Motor neuron (in vitro differentiated cells): ENCODE measurements at regions of chr22 and their contacts with region 1.

Region 1: DNA sequence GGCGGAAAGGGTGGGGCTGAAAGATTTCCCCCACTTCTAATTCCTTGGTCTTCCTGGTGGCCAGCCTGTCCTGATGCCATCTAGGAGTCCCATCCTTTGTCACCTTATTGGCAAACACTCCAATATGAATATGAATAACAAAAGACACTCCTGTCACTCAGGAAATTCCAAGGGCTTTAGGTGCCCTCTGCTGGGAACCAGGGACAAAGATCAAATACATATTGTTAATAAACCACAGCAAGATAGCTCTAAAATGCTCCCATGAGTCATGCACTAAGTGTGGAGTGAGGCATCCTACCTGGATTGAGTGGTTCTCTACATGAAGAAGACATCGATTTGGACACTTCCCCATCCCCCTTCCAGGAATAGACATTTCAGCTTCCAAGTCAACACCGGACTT is 823.6 kb downstream of the TBC1D22A start:
- ATAC-seq: no peak
- H3K4me3 ChIP-seq: no peak overlapping the region
- H3K27ac ChIP-seq: no peak overlapping the region
- H3K4me1 ChIP-seq: no peaks in the 10 kb centered on the region

Region 2: GRCh38 chr22:45612451-45612901 is 1973.5 kb before region 1 on chr22:
- in situ Hi-C with region 1: loop called in 1 of 9 experiments (anchors 25 kb)
- ATAC-seq: peak; percentile 95 to 97 (median 96)
- H3K4me3 ChIP-seq: no peak overlapping the region
- H3K27ac ChIP-seq: peak overlapping the region; percentile 80 to 82
- H3K4me1 ChIP-seq: peaks cover 17% of the 10 kb centered on the region in 2 donors

Region 3: DNA sequence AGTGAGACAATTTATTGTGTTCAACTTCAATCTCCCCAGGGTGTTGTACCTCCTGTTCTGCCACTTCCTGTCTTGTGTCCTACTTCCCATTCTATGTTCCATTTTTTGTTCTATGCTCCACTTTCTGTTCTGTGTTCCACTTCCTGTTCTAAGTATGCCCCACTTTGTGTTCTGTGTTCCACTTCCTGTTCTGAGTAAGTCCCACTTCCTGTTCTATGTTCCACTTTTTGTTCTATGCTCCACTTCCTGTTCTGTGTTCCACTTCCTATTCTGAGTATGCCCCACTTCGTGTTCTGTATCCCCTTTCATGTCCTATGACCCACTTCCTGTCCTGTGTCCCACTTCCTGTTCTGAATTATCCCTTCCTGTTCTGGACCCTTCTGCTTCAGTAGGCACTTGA is 90.9 kb before region 1 on chr22:
- in situ Hi-C with region 1: loop called in 1 of 9 experiments (anchors 25 kb)
- ATAC-seq: no peak
- H3K4me3 ChIP-seq: no peak overlapping the region
- H3K27ac ChIP-seq: no peak overlapping the region
- H3K4me1 ChIP-seq: no peaks in the 10 kb centered on the region

Region 4: GRCh38 chr22:48188231-48188721 is 602.3 kb after region 1 on chr22:
- in situ Hi-C with region 1: no loop called
- ATAC-seq: peak in 4 of 8 experiments; percentile 48 to 97 (median 92)
- H3K4me3 ChIP-seq: no peak overlapping the region
- H3K27ac ChIP-seq: no peak overlapping the region
- H3K4me1 ChIP-seq: no peaks in the 10 kb centered on the region